Activated CD4-positive, alpha-beta T cell treated with anti-CD3 and anti-CD28 coated beads, Interleukin-2, amount 10 ng/mL, durations not matched to agents 24 days and 14 days (primary cell): ENCODE measurements at regions of chrX and their contacts with region 1.

Region 1: DNA sequence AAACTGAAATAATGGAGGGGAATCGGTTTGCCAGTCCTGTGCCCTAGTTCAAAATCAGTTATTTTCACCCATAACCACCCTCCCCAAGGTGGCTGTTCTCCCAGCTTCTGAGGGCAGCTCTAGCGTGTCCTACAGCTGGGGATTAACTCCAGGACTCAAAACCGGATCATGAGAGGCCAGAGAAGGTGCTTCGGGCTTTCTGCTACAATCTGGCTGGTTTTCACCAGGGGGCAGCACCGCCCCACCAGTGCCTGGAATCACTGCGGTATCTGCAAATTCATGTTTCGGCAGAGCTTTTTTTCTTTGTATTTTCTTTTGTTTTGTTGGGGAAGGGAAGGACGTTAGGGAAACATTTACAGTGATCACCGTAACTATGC is 28.4 kb downstream of the PDHA1 start:
- DNase-seq: peak; percentile 88
- H3K4me3 Mint-ChIP-seq: peak overlapping the region; percentile 87
- H3K27ac Mint-ChIP-seq: no peak overlapping the region
- H3K4me1 Mint-ChIP-seq: peaks cover 6% of the 10 kb centered on the region
- H3K27me3 Mint-ChIP-seq: peaks cover 2% of the 10 kb centered on the region

Region 2: DNA sequence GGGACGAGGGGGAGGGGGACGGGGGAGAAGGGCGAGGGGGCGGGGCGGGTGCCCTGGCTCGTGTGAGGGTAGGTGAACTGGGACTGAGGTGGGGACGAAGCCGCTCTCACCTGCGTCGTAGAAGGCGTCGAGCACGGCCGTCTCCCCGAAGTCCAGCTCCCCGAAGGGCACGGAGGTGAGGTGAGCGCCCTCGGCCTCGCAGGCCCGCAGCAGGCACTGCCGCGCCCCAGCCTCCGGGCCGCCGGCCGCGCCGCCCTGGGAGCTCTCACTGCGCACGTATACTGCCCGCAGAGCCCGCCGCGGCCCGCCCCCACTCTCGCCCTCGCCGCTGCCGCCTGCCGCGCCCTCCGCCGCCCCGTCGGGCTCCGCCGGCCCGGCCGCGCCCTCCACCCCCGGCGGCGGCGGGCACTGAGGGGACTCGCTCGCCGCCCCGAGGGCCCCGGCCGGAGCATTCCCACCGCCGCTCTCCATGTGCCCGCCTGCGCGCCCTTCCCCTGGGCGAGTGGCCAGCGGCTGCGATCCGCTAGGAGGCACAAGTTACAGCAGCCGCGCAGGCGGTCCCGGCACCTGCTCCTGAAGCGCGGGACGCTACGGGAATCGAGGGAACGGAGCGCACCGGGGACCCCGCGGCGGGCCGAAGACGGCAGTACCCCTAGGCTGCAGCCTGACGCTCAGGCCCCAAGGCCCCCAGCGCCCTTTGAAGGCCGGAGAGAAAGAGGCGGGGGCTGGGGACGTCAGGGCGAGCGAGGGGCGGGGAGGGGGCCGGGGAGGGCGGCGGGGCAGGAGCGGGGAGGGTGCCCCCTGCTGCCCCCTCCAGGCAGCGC is 142.8 kb after region 1 on chrX and contains the start of gene MAP3K15:
- intact Hi-C with region 1: loop called (anchors 1 kb)
- DNase-seq: peak; percentile 64
- H3K4me3 Mint-ChIP-seq: peak within 1 kb of the TSS; percentile 71
- H3K27ac Mint-ChIP-seq: no peak within 1 kb of the TSS
- H3K4me1 Mint-ChIP-seq: peaks cover 2% of the 10 kb centered on the region
- H3K27me3 Mint-ChIP-seq: peaks cover 30% of the 10 kb centered on the region
- total RNA-seq, gene MAP3K15: 0.31 and 0.37 TPM in 2 replicates

Region 3: GRCh38 chrX:20066968-20067708 is 695.0 kb after region 1 on chrX:
- intact Hi-C with region 1: loop called (anchors 5 kb)
- DNase-seq: peak; percentile 66
- H3K4me3 Mint-ChIP-seq: no peak overlapping the region
- H3K27ac Mint-ChIP-seq: no peak overlapping the region
- H3K4me1 Mint-ChIP-seq: no peaks in the 10 kb centered on the region
- H3K27me3 Mint-ChIP-seq: peaks cover 2% of the 10 kb centered on the region